Mammary epithelial cell (primary cell): ENCODE measurements at regions of chr10 and their contacts with region 1.

Region 1: GRCh38 chr10:100081075-100082001 is at the start of gene CPN1:
- DNase-seq: no peak
- H3K4me3 ChIP-seq: no peak within 1 kb of the TSS
- H3K27ac ChIP-seq: no peak within 1 kb of the TSS
- H3K4me1 ChIP-seq: no peaks in the 10 kb centered on the region
- H3K27me3 ChIP-seq: peaks cover 2% of the 10 kb centered on the region
- CTCF ChIP-seq: no peak
- total RNA-seq, gene CPN1: not detected

Region 2: GRCh38 chr10:99425204-99425603 is 656.1 kb before region 1 on chr10:
- CTCF ChIA-PET with region 1: no interaction called
- dilution Hi-C with region 1: no loop called
- in situ Hi-C with region 1: no loop called
- intact Hi-C with region 1: no loop called
- DNase-seq: no peak
- H3K4me3 ChIP-seq: no peak overlapping the region
- H3K27ac ChIP-seq: no peak overlapping the region
- H3K4me1 ChIP-seq: peaks cover 7% of the 10 kb centered on the region
- H3K27me3 ChIP-seq: no peaks in the 10 kb centered on the region
- CTCF ChIP-seq: no peak

Region 3: DNA sequence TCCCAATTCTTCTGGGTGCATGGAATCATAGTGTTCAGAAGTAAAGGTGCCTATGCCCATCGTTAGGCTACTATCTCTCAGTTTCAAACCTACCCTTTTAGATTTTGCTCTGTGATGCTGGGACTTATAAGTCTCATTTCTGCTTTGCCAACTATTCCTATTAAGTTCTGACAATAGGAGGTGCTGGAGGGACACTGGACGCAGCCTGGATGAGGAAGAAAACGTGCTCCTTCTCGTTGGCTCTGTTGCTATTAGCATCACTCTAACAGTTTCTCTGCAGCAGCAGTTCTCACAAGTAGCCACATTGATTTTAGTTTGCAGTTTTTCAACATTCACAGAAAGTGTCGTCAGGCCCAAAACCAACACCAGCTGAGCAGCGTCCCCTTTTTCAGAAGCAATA is 226.5 kb before region 1 on chr10:
- CTCF ChIA-PET with region 1: no interaction called
- dilution Hi-C with region 1: loop called (anchors 25 kb)
- in situ Hi-C with region 1: no loop called
- intact Hi-C with region 1: no loop called
- DNase-seq: no peak
- H3K4me3 ChIP-seq: no peak overlapping the region
- H3K27ac ChIP-seq: no peak overlapping the region
- H3K4me1 ChIP-seq: no peaks in the 10 kb centered on the region
- H3K27me3 ChIP-seq: no peaks in the 10 kb centered on the region
- CTCF ChIP-seq: peak in 1 of 2 donors; percentile 2

Region 4: DNA sequence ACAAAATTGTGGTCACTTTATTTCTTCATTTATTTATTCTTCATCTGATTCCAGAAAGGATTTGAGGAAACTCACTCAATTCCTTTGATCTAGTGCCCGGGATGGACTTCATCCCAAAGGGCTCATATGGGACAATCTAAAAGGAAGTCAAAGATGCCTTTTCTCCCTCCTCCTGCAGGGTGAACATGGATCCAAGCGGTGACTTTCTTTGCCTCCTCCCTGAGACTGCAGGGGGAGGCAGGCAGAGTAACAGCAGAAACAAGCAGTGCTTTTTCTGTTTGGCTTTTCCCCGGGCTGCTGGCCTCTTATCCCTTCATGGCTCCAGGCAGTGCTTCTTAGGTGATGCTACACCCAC is 61.6 kb before region 1 on chr10:
- CTCF ChIA-PET with region 1: no interaction called
- dilution Hi-C with region 1: loop called (anchors 5 kb)
- in situ Hi-C with region 1: no loop called
- intact Hi-C with region 1: no loop called
- DNase-seq: no peak
- H3K4me3 ChIP-seq: no peak overlapping the region
- H3K27ac ChIP-seq: no peak overlapping the region
- H3K4me1 ChIP-seq: no peaks in the 10 kb centered on the region
- H3K27me3 ChIP-seq: no peaks in the 10 kb centered on the region
- CTCF ChIP-seq: peak in 1 of 2 donors; percentile 15

Region 5: DNA sequence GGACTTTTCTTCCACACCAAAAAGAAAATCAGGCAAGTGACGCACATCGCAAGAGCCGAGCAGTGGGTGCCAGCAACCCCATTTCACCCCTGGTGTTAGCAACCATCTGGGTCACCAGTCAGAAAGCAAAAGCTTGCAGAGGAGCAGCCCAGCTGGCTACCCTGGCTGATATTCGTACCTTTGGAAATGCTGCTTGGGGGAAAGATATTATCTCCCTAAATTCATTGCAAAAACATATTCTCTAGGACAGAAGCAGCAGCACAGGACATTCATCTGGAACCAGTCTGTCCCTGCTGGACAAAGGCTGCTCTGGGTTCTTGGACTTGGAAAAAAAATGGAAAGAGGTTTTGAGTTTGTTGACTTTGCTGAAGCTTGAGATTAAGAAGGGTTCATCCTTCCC is 58.7 kb after region 1 on chr10:
- CTCF ChIA-PET with region 1: no interaction called
- dilution Hi-C with region 1: loop called (anchors 5 kb)
- in situ Hi-C with region 1: no loop called
- intact Hi-C with region 1: no loop called
- DNase-seq: no peak
- H3K4me3 ChIP-seq: no peak overlapping the region
- H3K27ac ChIP-seq: no peak overlapping the region
- H3K4me1 ChIP-seq: no peaks in the 10 kb centered on the region
- H3K27me3 ChIP-seq: no peaks in the 10 kb centered on the region
- CTCF ChIP-seq: no peak

Region 6: DNA sequence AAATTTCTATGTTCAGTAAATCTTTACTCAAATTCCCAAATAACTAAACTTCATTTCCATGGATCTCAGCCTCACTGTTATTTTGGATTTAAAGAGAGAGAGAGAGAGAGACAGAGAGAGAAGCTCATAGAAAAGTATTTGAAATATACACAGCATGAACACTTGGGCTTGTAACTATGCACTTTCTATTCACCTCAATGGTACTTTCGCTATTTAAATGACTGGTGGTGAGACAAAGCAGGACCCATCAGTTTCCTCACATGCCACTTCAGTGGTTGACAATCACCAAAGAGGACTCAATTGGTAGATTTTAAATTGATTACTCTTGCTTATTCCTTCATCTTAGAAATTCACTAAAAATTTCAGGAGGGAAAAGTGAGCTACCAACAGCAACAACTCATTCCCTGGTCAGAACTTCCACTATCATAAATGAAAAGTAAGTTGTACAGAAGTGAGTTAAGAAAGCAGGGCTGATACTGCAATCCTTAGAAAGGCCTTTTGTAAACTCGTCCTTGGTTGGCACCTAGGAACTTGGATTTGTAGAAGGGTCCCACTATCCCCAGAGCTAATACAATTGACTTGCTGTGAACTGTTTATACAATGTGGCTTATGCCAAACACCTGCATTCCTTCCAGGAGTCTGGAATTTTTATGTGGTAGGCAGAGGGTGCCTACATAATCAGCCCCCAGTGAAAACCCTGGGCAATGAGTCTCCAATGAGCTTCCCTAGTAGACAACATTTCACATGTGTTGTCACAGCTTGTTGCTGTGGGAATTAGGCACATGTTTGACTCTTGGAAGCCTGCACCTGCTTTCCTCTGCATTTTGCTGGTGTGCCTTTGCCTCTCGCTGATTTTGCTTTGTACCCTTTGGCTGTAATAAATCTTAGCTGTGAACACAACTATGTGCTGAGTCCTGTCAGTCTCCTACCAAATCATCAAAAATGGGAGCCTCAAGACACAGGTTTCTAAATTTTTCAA is 93.7 kb after region 1 on chr10:
- CTCF ChIA-PET with region 1: no interaction called
- dilution Hi-C with region 1: loop called (anchors 5 kb)
- in situ Hi-C with region 1: no loop called
- intact Hi-C with region 1: no loop called
- DNase-seq: no peak
- H3K4me3 ChIP-seq: no peak overlapping the region
- H3K27ac ChIP-seq: no peak overlapping the region
- H3K4me1 ChIP-seq: peaks cover 5% of the 10 kb centered on the region
- H3K27me3 ChIP-seq: no peaks in the 10 kb centered on the region
- CTCF ChIP-seq: no peak